PC-3 (cell line): ENCODE measurements at regions of chr17 and their contacts with region 1.

Region 1: GRCh38 chr17:8041249-8041928 is 2.5 kb downstream of the ALOX15B start:
- DNase-seq: peak; percentile 72
- ATAC-seq: peak; percentile 70
- H3K4me3 ChIP-seq: no peak overlapping the region
- H3K27ac ChIP-seq: no peak overlapping the region
- H3K4me1 ChIP-seq: 0 out of 2 replicates have a peak, but pooled peaks cover 5% of the 10 kb centered on the region
- H3K27me3 ChIP-seq: no peaks in the 10 kb centered on the region
- CTCF ChIP-seq: peak; percentile 76

Region 2: DNA sequence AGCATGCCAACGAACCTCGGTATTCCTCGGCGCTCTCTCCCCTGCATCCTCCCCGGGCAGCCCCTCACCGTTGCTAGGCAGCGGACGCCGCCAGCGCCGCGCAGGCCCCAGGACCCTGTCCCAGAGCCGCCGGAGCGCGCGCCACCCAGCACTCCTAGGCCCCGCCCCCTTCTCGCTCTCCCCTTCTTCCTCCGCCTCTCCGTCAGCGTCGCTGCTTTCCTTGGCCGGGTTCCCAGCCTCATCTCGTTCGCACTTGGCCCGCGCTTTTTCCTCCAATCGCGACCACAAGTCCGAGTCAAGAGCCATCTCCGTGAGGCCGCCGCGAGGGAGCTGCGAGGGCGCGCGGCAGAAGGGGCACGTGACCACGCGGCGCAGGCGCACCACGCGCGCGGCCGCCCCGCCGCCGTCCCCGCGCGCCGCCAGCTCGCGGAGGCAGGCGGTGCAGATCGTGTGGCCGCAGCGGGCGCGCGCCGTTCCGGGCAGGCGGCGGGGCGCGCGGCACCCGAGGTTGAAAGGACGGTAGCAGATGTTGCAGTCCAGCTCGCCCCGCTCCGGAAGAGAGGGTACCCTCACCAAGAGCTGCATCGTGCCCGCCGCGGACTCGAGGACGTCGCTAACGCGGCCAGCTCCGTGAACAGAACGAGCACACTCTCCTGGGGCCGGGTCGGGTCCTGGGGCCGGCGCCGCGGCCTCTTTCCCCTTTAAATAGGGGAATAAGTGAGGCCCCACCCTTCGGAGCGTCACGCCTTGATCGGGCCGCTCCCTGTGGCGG is 125.6 kb before region 1 on chr17 and contains the start of gene RNF227:
- CTCF ChIA-PET with region 1: interaction called, 15 read pairs
- POLR2A ChIA-PET with region 1: no interaction called
- intact Hi-C with region 1: loop called (anchors 1 kb)
- DNase-seq: peak; percentile 83
- ATAC-seq: peak; percentile 76
- H3K4me3 ChIP-seq: peak within 1 kb of the TSS; percentile 69
- H3K27ac ChIP-seq: no peak within 1 kb of the TSS
- H3K4me1 ChIP-seq: peaks cover 17% of the 10 kb centered on the region
- H3K27me3 ChIP-seq: no peaks in the 10 kb centered on the region
- CTCF ChIP-seq: no peak
- total RNA-seq, gene RNF227: 0.11 and 0.52 TPM in 2 replicates

Region 3: DNA sequence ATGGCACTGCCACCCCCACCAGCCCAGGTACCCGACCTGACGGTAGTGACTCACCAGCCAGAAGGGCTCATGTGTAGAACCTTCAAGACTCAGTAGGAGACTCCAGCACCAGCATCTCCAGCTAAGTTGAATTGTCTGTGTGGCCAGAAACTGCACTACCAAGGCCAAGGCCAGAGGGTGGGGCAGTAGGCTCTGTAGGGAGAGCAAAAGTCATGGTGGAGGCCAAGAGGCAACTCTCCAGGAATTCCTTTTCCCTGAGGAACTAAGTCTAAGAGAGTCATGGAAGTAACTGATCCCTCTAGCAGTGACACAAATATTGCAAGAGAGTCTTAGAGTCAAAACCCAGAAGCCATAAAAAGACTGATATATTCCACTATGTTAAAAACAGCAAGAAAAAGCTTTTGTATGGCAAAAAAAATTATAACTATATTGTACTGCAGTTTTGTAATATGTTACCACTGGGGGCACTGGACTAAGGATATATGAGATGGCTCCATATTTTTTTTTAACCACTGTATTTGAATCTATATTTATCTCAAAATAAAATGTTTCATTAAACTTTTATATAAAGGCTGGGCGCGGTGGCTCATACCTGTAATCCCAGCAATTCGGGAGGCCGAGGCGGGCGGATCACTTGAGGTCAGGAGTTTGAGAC is 69.1 kb before region 1 on chr17:
- CTCF ChIA-PET with region 1: no interaction called
- POLR2A ChIA-PET with region 1: no interaction called
- intact Hi-C with region 1: no loop called
- DNase-seq: no peak
- ATAC-seq: no peak
- H3K4me3 ChIP-seq: no peak overlapping the region
- H3K27ac ChIP-seq: no peak overlapping the region
- H3K4me1 ChIP-seq: no peaks in the 10 kb centered on the region
- H3K27me3 ChIP-seq: no peaks in the 10 kb centered on the region
- CTCF ChIP-seq: peak; percentile 32; the same call in 1 of the 2 replicates

Region 4: GRCh38 chr17:7989781-7990655 is 51.4 kb before region 1 on chr17:
- CTCF ChIA-PET with region 1: interaction called, 8 read pairs
- POLR2A ChIA-PET with region 1: no interaction called
- intact Hi-C with region 1: loop called (anchors 1 kb)
- DNase-seq: peak; percentile 80
- ATAC-seq: peak; percentile 85
- H3K4me3 ChIP-seq: peak overlapping the region; percentile 81
- H3K27ac ChIP-seq: peak overlapping the region; percentile 8; the same call in 1 of the 2 replicates
- H3K4me1 ChIP-seq: peaks cover 7% of the 10 kb centered on the region; the same call in 1 of the 2 replicates
- H3K27me3 ChIP-seq: no peaks in the 10 kb centered on the region
- CTCF ChIP-seq: peak; percentile 82

Region 5: GRCh38 chr17:8016632-8017478 is 24.5 kb before region 1 on chr17:
- CTCF ChIA-PET with region 1: interaction called, 16 read pairs
- POLR2A ChIA-PET with region 1: no interaction called
- intact Hi-C with region 1: loop called (anchors 1 kb)
- DNase-seq: peak; percentile 65
- ATAC-seq: peak; percentile 63
- H3K4me3 ChIP-seq: peak overlapping the region; percentile 63
- H3K27ac ChIP-seq: peak overlapping the region; percentile 37
- H3K4me1 ChIP-seq: peaks cover 28% of the 10 kb centered on the region
- H3K27me3 ChIP-seq: no peaks in the 10 kb centered on the region
- CTCF ChIP-seq: peak; percentile 82